ENCODE measurements at regions of chr3 and their contacts with region 1.

Region 1: DNA sequence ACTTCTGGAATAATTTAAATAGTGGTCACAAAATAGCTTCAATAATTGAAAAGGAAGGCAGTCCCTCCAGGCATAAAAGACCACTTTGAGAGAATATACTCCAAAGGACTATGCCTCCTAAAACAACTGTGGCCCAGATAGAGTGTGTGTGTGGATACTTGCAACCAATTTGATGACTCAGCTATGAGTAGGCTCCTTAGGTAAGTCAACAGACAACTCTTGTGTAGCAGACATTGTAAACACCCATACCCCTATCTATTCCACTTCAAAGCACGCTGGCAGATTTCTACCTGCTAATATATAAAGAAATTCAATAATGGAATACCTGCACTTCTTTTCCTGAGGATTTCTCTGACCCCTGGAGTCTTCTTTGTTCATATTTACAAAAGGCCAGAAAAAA is 254.5 kb downstream of the NEK10 start:
- DNase-seq: peak; percentile 38
- H3K4me3 Mint-ChIP-seq: no peak overlapping the region
- H3K27ac Mint-ChIP-seq: no peak overlapping the region
- H3K4me1 Mint-ChIP-seq: peaks cover 9% of the 10 kb centered on the region
- H3K27me3 Mint-ChIP-seq: no peaks in the 10 kb centered on the region
- CTCF ChIP-seq: no peak

Region 2: GRCh38 chr3:26061947-26062346 is 1052.7 kb before region 1 on chr3:
- CTCF ChIA-PET with region 1: no interaction called
- POLR2A ChIA-PET with region 1: no interaction called
- intact Hi-C with region 1: loop called (anchors 5 kb)
- DNase-seq: no peak
- H3K4me3 Mint-ChIP-seq: no peak overlapping the region
- H3K27ac Mint-ChIP-seq: no peak overlapping the region
- H3K4me1 Mint-ChIP-seq: no peaks in the 10 kb centered on the region
- H3K27me3 Mint-ChIP-seq: no peaks in the 10 kb centered on the region
- CTCF ChIP-seq: no peak

Region 3: GRCh38 chr3:27160146-27160545 is 45.5 kb after region 1 on chr3:
- CTCF ChIA-PET with region 1: no interaction called
- POLR2A ChIA-PET with region 1: no interaction called
- intact Hi-C with region 1: no loop called
- DNase-seq: no peak
- H3K4me3 Mint-ChIP-seq: no peak overlapping the region
- H3K27ac Mint-ChIP-seq: no peak overlapping the region
- H3K4me1 Mint-ChIP-seq: no peaks in the 10 kb centered on the region
- H3K27me3 Mint-ChIP-seq: no peaks in the 10 kb centered on the region
- CTCF ChIP-seq: no peak

Region 4: GRCh38 chr3:27585429-27585828 is 470.7 kb after region 1 on chr3:
- CTCF ChIA-PET with region 1: no interaction called
- POLR2A ChIA-PET with region 1: no interaction called
- intact Hi-C with region 1: no loop called
- DNase-seq: no peak
- H3K4me3 Mint-ChIP-seq: no peak overlapping the region
- H3K27ac Mint-ChIP-seq: no peak overlapping the region
- H3K4me1 Mint-ChIP-seq: peaks cover 10% of the 10 kb centered on the region
- H3K27me3 Mint-ChIP-seq: no peaks in the 10 kb centered on the region
- CTCF ChIP-seq: no peak

Measured in MCF 10A (cell line).